Cardiac septum (tissue), 1 donor: ENCODE measurements at regions of chr21 and their contacts with region 1.

Region 1: DNA sequence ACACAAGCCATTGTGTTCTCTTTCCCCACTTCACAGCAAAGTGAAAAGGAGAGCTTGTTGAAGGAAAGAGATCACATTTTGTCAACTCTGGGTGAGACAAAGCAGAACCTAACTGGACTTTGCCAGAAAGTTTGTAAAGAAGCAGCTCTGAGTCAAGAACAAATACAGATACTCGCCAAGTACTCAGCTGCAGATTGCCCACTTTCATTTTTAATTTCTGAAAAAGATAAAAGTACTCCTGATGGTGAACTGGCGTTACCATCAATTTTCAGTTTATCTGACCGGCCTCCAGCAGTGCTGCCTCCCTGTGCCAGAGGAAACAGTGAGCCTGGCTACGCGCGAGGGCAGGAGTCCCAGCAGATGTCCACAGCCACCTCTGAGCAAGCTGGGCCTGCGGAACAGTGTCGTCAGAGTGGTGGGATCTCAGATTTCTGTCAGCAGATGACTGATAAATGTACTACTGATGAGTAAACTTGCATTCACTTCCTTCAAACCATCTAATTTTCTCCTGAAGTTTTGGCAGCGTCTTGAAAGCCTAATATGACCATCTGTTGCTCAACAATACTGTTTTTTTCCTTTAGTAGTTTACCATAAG is 43.7 kb downstream of the BACH1 start:
- DNase-seq: no peak

Region 2: DNA sequence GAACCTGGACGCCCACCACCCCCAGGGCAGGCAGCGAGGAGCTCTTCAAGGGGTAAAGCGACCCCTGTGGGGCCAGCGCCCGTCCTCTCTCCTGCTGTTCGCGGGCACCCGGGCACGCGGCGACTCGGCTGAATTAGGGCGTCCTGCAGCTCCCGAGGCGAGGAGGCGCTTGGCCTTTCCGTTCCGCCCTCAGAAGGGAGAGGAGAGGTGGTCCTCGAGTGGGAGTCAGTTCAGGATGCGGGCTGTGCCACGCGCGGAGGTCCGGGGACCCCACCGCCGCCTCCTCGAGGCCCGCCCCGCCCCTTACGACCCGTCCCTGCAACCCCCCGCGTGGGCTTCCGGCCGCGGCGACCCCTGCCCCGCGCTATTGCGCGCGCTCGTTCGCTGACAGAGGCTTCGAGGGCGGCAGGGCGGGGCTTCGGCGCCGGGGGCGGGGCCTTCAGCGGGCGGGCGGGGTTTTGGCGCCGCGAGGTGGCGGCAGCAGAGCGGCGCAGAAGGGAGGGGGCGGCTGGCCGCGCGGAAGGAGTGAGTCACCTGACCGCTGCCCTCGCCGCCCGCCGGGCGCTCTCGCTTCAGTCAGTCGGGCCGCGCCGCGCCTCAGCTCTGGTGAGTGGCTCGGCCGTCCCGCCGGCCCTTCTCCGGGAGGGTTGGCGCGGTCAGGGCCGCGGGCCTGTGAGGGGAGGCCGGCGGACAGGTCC is 44.0 kb before region 1 on chr21 and contains the start of gene BACH1:
- intact Hi-C with region 1: loop called (anchors 2 kb)
- DNase-seq: peak; percentile 95
- total RNA-seq, gene BACH1: 51.3 TPM

Region 3: DNA sequence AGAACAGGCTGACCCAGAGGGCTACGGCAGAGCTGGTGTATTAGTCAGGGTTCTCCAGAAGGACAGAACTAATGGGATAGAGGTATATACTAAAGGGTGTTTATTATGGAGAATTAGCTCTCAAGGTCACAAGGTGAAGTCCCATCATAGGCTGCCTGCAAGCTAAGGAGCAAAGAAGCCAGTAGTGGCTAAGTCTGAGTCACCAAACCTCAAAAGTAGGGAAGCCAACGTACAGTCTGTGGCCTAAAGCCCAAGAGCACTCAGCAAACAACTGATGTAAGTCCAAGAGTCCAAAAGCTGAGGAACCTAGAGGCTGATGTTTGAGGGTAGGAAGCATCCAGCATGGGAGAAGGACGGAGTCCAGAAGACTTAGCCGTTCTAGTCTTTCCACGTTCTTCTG is 135.5 kb after region 1 on chr21:
- intact Hi-C with region 1: no loop called
- DNase-seq: no peak